Right ventricle myocardium inferior (tissue), 1 donor: ENCODE measurements at regions of chr3 and their contacts with region 1.

Region 1: DNA sequence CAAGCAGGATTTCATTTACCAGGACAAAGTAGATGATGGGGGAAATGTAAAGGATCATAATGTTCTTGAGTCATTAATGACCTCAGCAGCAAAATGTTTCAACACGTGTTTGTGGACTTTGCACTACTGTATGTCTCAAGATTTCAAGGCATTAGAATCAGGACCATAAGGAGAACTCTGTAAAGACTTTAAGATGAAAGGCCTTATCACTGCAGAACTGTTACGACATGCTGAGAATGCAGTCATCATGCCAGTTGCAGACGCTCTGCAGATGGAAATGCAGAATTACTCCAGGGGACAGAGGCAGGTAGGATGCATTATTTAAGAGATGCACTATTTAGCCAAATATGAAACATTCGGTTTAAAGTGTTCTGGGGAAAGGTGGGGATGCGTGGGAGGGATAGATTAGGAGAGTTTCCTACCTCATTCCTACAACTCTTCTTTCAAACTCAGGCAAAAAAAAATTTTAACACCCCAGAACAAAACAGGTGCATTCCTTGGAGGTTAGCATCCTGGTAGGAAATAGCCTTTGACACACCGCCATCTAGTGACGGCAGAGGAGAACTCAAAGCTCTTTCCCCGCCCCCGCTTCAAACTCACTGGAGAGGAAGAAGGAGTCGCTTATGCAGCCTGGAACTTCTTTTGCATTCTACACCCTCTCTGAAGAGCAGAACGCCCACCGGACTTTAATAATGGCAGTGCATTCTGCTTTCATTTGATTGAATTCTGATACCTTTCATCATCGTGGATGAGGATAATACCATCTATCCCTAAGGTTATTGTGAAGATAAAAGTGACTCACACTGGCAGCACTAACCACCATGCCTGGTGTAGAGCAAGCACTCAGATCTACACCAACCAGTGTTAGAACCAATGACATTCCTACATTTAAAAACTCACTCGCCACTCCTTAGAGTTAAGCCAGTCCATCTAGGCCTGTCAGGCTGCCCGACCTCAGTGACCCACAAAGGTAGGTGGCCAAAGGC is 43.1 kb upstream of the TOPAZ1 start:
- DNase-seq: no peak
- ATAC-seq: peak; percentile 42

Region 2: GRCh38 chr3:43542328-43543043 is 656.1 kb before region 1 on chr3:
- intact Hi-C with region 1: loop called (anchors 2 kb)
- DNase-seq: no peak
- ATAC-seq: no peak

Region 3: GRCh38 chr3:43855674-43856299 is 342.8 kb before region 1 on chr3:
- intact Hi-C with region 1: loop called (anchors 5 kb)
- DNase-seq: no peak
- ATAC-seq: peak; percentile 80

Region 4: GRCh38 chr3:44259404-44259803 is 60.8 kb after region 1 on chr3:
- intact Hi-C with region 1: no loop called
- DNase-seq: no peak
- ATAC-seq: no peak

Region 5: DNA sequence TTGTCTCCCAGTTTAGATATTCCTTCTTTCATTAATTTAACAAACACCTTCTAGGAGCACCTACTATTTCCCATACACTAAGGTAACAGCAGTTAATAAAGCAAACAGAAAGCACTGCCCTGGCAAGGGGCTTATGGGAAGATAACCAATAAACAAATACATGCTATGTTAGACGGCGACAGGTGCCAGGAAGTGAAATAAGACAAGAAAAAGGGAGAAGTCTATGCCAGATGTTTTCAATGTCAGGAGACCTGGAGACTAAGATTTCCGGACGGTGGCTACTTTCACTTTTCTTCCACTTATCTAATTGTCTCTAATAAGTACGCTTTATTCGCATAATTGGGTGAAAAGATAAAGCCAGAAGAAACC is 311.4 kb after region 1 on chr3:
- intact Hi-C with region 1: no loop called
- DNase-seq: no peak
- ATAC-seq: no peak